CD8-positive, alpha-beta T cell (primary cell): ENCODE measurements at regions of chr3 and their contacts with region 1.

Region 1: GRCh38 chr3:169744366-169745054 is 20.4 kb downstream of the TERC start:
- DNase-seq: peak in 1 of 9 experiments; percentile 22
- ATAC-seq: no peak
- H3K4me3 ChIP-seq: no peak overlapping the region
- H3K4me3 Mint-ChIP-seq: no peak overlapping the region
- H3K27ac ChIP-seq: no peak overlapping the region
- H3K27ac Mint-ChIP-seq: no peak overlapping the region
- H3K4me1 ChIP-seq: no peaks in the 10 kb centered on the region
- H3K4me1 Mint-ChIP-seq: peaks cover 3% of the 10 kb centered on the region
- H3K27me3 ChIP-seq: no peaks in the 10 kb centered on the region
- H3K27me3 Mint-ChIP-seq: peaks cover 20% of the 10 kb centered on the region
- CTCF ChIP-seq: peak; percentile 35

Region 2: GRCh38 chr3:168047190-168047795 is 1697.2 kb before region 1 on chr3:
- CTCF ChIA-PET with region 1: no interaction called
- POLR2A ChIA-PET with region 1: no interaction called
- intact Hi-C with region 1: loop called in 1 of 2 experiments (anchors 5 kb)
- DNase-seq: peak in 2 of 9 experiments; percentile 42 to 69
- ATAC-seq: peak; percentile 51
- H3K4me3 ChIP-seq: no peak overlapping the region
- H3K4me3 Mint-ChIP-seq: no peak overlapping the region
- H3K27ac ChIP-seq: no peak overlapping the region
- H3K27ac Mint-ChIP-seq: no peak overlapping the region
- H3K4me1 ChIP-seq: no peaks in the 10 kb centered on the region
- H3K4me1 Mint-ChIP-seq: no peaks in the 10 kb centered on the region
- H3K27me3 ChIP-seq: no peaks in the 10 kb centered on the region
- H3K27me3 Mint-ChIP-seq: no peaks in the 10 kb centered on the region
- CTCF ChIP-seq: peak; percentile 46

Region 3: DNA sequence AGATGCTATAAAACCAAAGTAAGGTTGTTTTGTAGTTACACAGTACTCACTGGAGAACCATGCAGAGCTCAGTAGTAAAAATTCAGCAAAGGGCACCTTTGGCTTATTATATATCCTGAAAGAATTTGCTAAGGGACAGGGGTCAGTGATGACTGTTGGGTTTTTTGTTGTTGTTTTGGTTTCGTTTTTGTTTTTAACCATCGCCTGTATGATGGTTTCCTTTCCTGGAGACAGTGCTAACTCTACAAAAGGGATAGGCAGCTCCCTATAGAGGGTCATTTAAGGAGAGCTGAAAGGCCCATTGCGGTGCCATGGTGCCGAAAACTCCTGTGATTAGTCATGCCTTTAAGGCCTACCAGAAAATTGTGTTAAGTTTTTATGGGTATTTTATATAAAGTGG is 1530.6 kb before region 1 on chr3:
- CTCF ChIA-PET with region 1: no interaction called
- POLR2A ChIA-PET with region 1: no interaction called
- intact Hi-C with region 1: loop called in 1 of 2 experiments (anchors 10 kb)
- DNase-seq: peak in 2 of 9 experiments; percentile 1 to 18
- ATAC-seq: peak; percentile 23
- H3K4me3 ChIP-seq: peak overlapping the region in 1 of 2 experiments; percentile 9
- H3K4me3 Mint-ChIP-seq: peak overlapping the region; percentile 36
- H3K27ac ChIP-seq: no peak overlapping the region
- H3K27ac Mint-ChIP-seq: no peak overlapping the region
- H3K4me1 ChIP-seq: no peaks in the 10 kb centered on the region
- H3K4me1 Mint-ChIP-seq: peaks cover 6% of the 10 kb centered on the region
- H3K27me3 ChIP-seq: no peaks in the 10 kb centered on the region
- H3K27me3 Mint-ChIP-seq: no peaks in the 10 kb centered on the region
- CTCF ChIP-seq: no peak

Region 4: GRCh38 chr3:168865022-168865551 is 879.4 kb before region 1 on chr3:
- CTCF ChIA-PET with region 1: interaction called, 3 read pairs
- POLR2A ChIA-PET with region 1: no interaction called
- intact Hi-C with region 1: loop called (anchors 5 to 10 kb)
- DNase-seq: peak in 1 of 9 experiments; percentile 1
- ATAC-seq: no peak
- H3K4me3 ChIP-seq: no peak overlapping the region
- H3K4me3 Mint-ChIP-seq: no peak overlapping the region
- H3K27ac ChIP-seq: no peak overlapping the region
- H3K27ac Mint-ChIP-seq: no peak overlapping the region
- H3K4me1 ChIP-seq: no peaks in the 10 kb centered on the region
- H3K4me1 Mint-ChIP-seq: no peaks in the 10 kb centered on the region
- H3K27me3 ChIP-seq: no peaks in the 10 kb centered on the region
- H3K27me3 Mint-ChIP-seq: no peaks in the 10 kb centered on the region
- CTCF ChIP-seq: peak; percentile 45

Region 5: DNA sequence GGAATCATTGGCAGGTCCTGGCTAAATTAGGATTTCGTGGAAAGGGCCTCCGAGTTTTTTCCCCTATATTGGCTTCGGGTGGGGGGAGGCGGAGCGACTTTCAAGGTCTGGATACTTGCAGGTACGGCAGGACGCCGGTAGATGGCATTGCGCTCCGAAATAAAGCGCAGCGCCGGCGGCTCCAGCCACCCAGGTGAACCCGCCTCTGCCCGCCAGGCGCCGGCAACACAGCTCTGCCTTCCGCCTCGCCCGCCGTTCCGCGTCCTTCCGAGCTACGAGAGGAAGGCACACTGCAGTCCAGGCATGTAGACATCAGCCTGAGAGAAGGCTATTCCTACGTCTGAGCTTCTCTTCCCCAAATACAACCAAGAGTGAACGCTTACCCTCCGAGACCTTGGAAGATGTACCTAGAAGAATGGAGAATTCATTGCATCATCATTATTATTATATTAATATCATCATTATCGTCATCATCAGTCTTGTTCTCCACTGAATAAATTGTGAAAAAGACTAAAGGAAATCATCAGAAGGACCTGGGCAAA is 595.1 kb before region 1 on chr3:
- CTCF ChIA-PET with region 1: no interaction called
- POLR2A ChIA-PET with region 1: no interaction called
- intact Hi-C with region 1: loop called (anchors 5 to 10 kb)
- DNase-seq: peak; percentile 18 to 70 (median 54)
- ATAC-seq: peak; percentile 95
- H3K4me3 ChIP-seq: no peak overlapping the region
- H3K4me3 Mint-ChIP-seq: peak overlapping the region; percentile 29
- H3K27ac ChIP-seq: no peak overlapping the region
- H3K27ac Mint-ChIP-seq: no peak overlapping the region
- H3K4me1 ChIP-seq: peaks cover 23% of the 10 kb centered on the region
- H3K4me1 Mint-ChIP-seq: peaks cover 25% of the 10 kb centered on the region
- H3K27me3 ChIP-seq: peaks cover 17 to 27% of the 10 kb centered on the region in 2 experiments
- H3K27me3 Mint-ChIP-seq: peaks cover 69% of the 10 kb centered on the region
- CTCF ChIP-seq: peak; percentile 43

Region 6: DNA sequence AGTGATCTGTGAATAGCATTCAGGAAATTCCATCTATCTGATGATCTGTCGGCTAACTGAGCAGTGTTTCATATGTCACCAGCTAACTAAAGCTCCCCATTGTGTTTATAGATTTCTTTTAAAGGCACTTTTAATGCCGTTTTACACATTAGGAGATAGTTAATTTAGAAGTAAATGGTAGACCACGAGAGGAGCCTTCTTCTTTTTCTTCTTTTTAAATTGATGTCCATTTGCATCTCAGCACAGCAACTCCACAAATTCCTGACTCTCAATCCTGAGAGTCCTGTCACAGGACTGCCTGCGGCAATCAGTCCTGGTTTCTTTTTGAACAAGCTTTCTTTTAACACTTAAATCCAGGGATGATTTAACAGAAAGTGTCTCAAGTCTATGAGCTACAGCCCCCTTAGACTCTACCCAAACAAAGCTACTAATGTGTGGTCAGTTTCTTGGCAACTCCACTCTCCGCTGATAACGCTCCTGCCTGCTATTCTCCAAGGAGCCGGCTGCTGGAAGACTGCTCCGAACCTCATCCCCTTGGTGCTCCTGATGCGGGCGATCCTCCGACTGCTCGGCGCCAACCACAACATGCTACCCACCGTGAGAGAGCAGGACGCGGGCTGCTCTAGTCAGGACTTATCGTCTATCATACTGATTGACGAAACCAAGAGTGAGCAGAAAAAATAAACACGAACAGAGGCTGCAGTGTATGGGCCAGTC is 502.4 kb before region 1 on chr3:
- CTCF ChIA-PET with region 1: no interaction called
- POLR2A ChIA-PET with region 1: no interaction called
- intact Hi-C with region 1: no loop called
- DNase-seq: no peak
- ATAC-seq: no peak
- H3K4me3 ChIP-seq: no peak overlapping the region
- H3K4me3 Mint-ChIP-seq: no peak overlapping the region
- H3K27ac ChIP-seq: no peak overlapping the region
- H3K27ac Mint-ChIP-seq: no peak overlapping the region
- H3K4me1 ChIP-seq: no peaks in the 10 kb centered on the region
- H3K4me1 Mint-ChIP-seq: peaks cover 3% of the 10 kb centered on the region
- H3K27me3 ChIP-seq: no peaks in the 10 kb centered on the region
- H3K27me3 Mint-ChIP-seq: peaks cover 12% of the 10 kb centered on the region
- CTCF ChIP-seq: no peak